Natural killer cell (primary cell): ENCODE measurements at regions of chr1 and their contacts with region 1.

Region 1: GRCh38 chr1:35882945-35883634 is at the start of gene AGO1:
- DNase-seq: peak; percentile 96 to 98
- ATAC-seq: peak; percentile 99 to 100 (median 99)
- H3K4me3 ChIP-seq: peak within 1 kb of the TSS; percentile 98
- H3K4me3 Mint-ChIP-seq: peak within 1 kb of the TSS; percentile 93
- H3K27ac ChIP-seq: peak within 1 kb of the TSS; percentile 45
- H3K27ac Mint-ChIP-seq: peak within 1 kb of the TSS in 1 of 2 donors; percentile 3
- H3K4me1 ChIP-seq: peaks cover 38% of the 10 kb centered on the region
- H3K4me1 Mint-ChIP-seq: peaks cover 30 to 46% of the 10 kb centered on the region in 2 donors
- H3K27me3 ChIP-seq: no peaks in the 10 kb centered on the region
- H3K27me3 Mint-ChIP-seq: no peaks in the 10 kb centered on the region
- CTCF ChIP-seq: peak; percentile 94
- total RNA-seq, gene AGO1: 30.1 to 34.5 (median 34.3) TPM

Region 2: DNA sequence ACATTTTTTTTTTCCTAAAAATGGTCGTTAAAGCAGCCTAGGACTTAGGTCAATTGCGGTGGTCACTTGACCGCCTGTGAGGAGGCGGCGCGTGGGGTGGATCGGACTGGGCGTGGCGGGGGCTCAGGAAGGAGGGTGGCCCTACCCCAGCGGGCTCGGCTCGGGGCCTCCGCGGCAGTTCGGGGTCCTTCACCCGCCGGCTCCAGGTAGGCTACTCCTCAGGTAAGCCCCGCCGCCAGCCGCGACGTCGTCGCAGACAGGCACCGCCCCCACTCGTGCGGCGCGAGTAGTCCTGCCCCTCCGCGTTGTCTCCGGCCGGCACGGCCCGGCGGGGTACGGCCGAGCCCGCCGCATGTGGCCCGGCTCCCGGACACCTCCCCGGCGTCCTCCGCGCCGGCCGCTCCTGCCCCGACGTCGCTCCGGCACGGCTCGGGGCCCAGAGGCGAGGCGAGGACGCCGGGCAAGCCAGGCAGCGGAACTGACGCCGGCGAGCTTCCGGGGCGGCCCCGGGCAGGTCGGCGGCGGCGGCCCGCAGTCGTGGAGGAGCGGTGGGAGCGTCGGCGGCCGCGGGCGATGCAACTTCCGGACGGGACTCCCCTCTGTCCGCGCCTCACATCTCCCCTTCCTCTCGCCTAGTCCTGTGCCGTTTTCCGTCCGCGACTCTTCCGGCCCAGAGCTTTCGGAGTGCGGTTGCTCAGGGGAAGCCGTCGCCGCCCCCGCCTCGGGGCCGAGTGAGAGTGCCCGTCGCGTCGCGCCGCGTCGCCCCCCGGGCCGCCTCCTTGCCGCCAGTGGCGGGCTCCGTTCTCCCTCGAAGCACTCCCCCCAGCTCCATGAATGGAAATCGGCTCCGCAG is 47.7 kb after region 1 on chr1 and contains the start of gene AGO3:
- intact Hi-C with region 1: loop called (anchors 1 kb)
- DNase-seq: peak; percentile 84 to 95
- ATAC-seq: peak; percentile 83 to 97 (median 92)
- H3K4me3 ChIP-seq: peak within 1 kb of the TSS; percentile 83
- H3K4me3 Mint-ChIP-seq: peak within 1 kb of the TSS; percentile 96
- H3K27ac ChIP-seq: peak within 1 kb of the TSS; percentile 99
- H3K27ac Mint-ChIP-seq: peak within 1 kb of the TSS; percentile 94 to 96
- H3K4me1 ChIP-seq: peaks cover 9% of the 10 kb centered on the region
- H3K4me1 Mint-ChIP-seq: peaks cover 22 to 25% of the 10 kb centered on the region in 2 donors
- H3K27me3 ChIP-seq: no peaks in the 10 kb centered on the region
- H3K27me3 Mint-ChIP-seq: no peaks in the 10 kb centered on the region
- CTCF ChIP-seq: no peak
- total RNA-seq, gene AGO3: 36.5 to 49.6 (median 49.0) TPM

Region 3: GRCh38 chr1:36400825-36401601 is 517.9 kb after region 1 on chr1:
- intact Hi-C with region 1: no loop called
- DNase-seq: peak; percentile 58 to 70
- ATAC-seq: peak; percentile 75 to 91 (median 77)
- H3K4me3 ChIP-seq: peak overlapping the region; percentile 58
- H3K4me3 Mint-ChIP-seq: peak overlapping the region; percentile 94
- H3K27ac ChIP-seq: peak overlapping the region; percentile 98
- H3K27ac Mint-ChIP-seq: peak overlapping the region; percentile 97 to 99
- H3K4me1 ChIP-seq: peaks cover 50% of the 10 kb centered on the region
- H3K4me1 Mint-ChIP-seq: peaks cover 47 to 50% of the 10 kb centered on the region in 2 donors
- H3K27me3 ChIP-seq: no peaks in the 10 kb centered on the region
- H3K27me3 Mint-ChIP-seq: no peaks in the 10 kb centered on the region
- CTCF ChIP-seq: no peak